ENCODE measurements at regions of chr2 and their contacts with region 1.

Region 1: DNA sequence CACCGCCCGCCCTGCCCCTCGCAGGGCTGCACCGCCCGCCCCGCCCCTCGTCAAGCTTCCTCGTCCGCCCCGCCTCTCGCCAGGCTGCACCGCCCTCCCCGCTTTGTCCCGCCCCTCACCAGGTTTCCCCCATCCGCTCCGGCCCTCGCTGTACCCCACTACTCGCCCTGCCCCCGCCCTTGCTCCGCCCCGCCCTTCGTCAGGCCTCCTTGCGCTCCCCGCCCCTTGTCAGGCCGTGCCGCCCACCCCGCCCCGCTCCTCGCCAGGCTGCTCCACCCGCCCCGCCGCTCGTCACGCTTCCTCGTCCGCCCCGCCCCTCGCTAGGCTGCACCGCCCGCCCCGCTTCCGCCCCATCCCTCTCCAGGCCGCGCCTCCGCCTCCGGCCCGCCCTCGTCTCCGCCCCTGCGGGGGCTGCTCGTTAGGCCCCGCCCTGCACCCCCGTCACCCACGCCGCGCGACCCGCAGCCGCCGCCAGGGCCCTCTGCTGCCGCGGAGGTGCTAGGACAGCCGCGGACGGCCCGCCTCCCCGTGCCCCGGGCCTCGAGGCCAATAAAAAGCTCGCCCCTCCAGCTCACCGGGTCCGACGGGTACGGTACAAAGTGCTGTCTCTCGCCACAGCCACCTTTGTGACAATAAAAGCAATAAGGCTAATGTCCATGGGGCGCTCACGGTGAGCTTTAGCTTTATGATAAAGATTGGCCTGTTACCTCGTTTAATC is 574 bp upstream of the DNPEP start:
- DNase-seq: peak; percentile 98 to 100 (median 99)
- ATAC-seq: peak; percentile 78
- H3K4me3 ChIP-seq: peak overlapping the region; percentile 44
- H3K4me3 Mint-ChIP-seq: peak overlapping the region; percentile 83
- H3K27ac ChIP-seq: peak overlapping the region; percentile 64 to 75
- H3K27ac Mint-ChIP-seq: peak overlapping the region; percentile 95
- H3K4me1 ChIP-seq: peaks cover 26% of the 10 kb centered on the region
- H3K4me1 Mint-ChIP-seq: peaks cover 22% of the 10 kb centered on the region
- H3K27me3 ChIP-seq: no peaks in the 10 kb centered on the region
- H3K27me3 Mint-ChIP-seq: no peaks in the 10 kb centered on the region
- CTCF ChIP-seq: peak; percentile 65

Region 2: GRCh38 chr2:217816396-217816869 is 1571.9 kb before region 1 on chr2:
- CTCF ChIA-PET with region 1: no interaction called
- POLR2A ChIA-PET with region 1: no interaction called
- intact Hi-C with region 1: no loop called
- DNase-seq: no peak
- ATAC-seq: no peak
- H3K4me3 ChIP-seq: no peak overlapping the region
- H3K4me3 Mint-ChIP-seq: no peak overlapping the region
- H3K27ac ChIP-seq: no peak overlapping the region
- H3K27ac Mint-ChIP-seq: no peak overlapping the region
- H3K4me1 ChIP-seq: no peaks in the 10 kb centered on the region
- H3K4me1 Mint-ChIP-seq: no peaks in the 10 kb centered on the region
- H3K27me3 ChIP-seq: no peaks in the 10 kb centered on the region
- H3K27me3 Mint-ChIP-seq: no peaks in the 10 kb centered on the region
- CTCF ChIP-seq: no peak

Region 3: DNA sequence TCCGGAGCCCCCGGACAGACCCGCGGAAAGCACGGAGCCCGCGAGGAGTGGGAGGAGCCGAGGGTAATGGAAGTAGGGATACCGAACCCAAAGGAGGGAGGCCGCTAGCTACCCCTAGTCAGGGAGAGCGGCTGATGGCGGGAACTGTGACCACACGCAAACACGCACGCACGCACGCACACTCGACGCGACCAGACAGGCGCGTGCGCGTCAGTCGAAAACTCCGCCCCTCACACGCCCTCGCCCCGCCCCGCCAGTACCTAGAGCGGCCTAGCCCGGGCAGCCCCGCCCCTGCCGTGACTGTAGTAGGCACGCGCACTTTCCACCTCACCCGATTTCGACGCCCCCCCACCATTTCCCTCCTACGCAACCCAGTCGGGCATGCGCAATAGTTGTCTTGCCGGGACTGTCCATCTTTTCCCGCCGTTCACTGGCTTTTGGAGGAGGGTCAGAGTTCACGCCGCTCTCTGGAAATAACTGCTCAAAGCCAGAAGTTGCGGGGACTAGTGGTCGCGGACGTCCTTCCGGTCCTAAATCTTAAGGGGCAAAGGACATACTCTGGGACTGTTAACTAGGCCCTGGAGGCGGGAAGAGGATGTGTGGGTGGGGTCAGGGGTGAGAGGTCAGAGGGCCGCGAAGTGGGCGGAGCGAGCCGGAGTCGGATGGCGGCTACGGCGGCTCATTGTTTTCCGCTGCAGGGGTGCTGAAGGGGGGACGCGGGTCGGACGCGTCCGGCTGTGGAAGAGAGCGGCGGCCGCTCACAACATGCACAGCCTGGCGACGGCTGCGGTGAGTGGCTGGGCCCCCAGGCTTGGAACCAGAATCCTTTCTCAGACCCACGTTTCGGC is 819.9 kb before region 1 on chr2 and contains the starts of genes CNOT9 and USP37:
- CTCF ChIA-PET with region 1: no interaction called
- POLR2A ChIA-PET with region 1: interaction called, 3 read pairs
- intact Hi-C with region 1: loop called in 1 of 2 experiments (anchors 5 kb)
- DNase-seq: peak; percentile 99 to 100 (median 100)
- ATAC-seq: peak; percentile 85
- H3K4me3 ChIP-seq: peak within 1 kb of the TSS; percentile 77
- H3K4me3 Mint-ChIP-seq: peak within 1 kb of the TSS; percentile 96
- H3K27ac ChIP-seq: peak within 1 kb of the TSS; percentile 98 to 99
- H3K27ac Mint-ChIP-seq: peak within 1 kb of the TSS; percentile 97
- H3K4me1 ChIP-seq: peaks cover 32% of the 10 kb centered on the region
- H3K4me1 Mint-ChIP-seq: peaks cover 77% of the 10 kb centered on the region
- H3K27me3 ChIP-seq: no peaks in the 10 kb centered on the region
- H3K27me3 Mint-ChIP-seq: no peaks in the 10 kb centered on the region
- CTCF ChIP-seq: no peak
- total RNA-seq, gene CNOT9: 62.8 to 66.8 TPM
- total RNA-seq, gene USP37: 20.2 to 24.4 TPM

Region 4: DNA sequence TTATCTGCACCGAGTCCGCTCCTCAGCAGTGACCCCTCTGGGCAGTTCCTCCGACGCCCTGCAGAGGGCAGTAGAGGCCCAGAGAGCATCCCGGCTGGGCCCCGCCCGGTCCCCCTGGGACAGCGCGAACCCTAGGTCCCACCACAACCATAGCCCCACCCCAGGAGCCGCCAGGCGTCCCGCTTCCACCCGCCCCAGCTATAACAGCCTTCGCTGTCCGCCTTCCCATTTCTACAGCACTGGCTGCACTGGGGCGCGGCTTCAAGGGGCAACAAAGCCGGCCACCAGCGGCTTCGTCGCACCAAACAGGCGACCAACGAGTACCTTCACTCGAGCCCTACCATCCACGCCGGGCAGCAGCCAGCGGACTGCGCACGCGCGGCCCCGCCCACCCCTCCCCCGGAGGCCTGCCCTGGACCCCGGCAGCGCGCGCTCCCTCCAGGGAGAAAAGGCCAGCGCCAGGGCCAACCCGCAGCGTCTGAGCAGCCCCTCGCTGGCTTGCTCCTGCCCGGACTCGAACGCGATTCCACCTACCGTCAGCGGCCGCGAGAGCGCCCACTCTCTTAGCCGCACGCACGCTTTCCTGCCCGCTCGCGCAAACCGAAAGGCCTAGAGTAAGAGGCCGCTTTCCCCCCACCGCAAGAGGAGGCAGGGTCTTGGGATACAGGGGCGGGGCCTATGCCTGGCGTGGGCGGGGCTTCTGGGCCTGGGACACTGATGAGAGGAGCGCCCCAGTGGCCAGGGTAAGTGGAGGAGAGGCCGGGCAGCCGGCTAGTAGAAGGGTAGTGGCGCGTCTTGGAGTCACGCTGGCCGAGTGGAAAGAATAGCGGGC is 227.9 kb before region 1 on chr2 and contains the start of gene NHEJ1:
- CTCF ChIA-PET with region 1: interaction called, 3 read pairs
- POLR2A ChIA-PET with region 1: interaction called, 3 read pairs
- intact Hi-C with region 1: loop called in 1 of 2 experiments (anchors 5 kb)
- DNase-seq: peak; percentile 82 to 97 (median 90)
- ATAC-seq: peak; percentile 90
- H3K4me3 ChIP-seq: peak within 1 kb of the TSS; percentile 78
- H3K4me3 Mint-ChIP-seq: peak within 1 kb of the TSS; percentile 94
- H3K27ac ChIP-seq: peak within 1 kb of the TSS; percentile 52 to 77
- H3K27ac Mint-ChIP-seq: peak within 1 kb of the TSS; percentile 94
- H3K4me1 ChIP-seq: peaks cover 17% of the 10 kb centered on the region
- H3K4me1 Mint-ChIP-seq: peaks cover 24% of the 10 kb centered on the region
- H3K27me3 ChIP-seq: no peaks in the 10 kb centered on the region
- H3K27me3 Mint-ChIP-seq: no peaks in the 10 kb centered on the region
- CTCF ChIP-seq: peak; percentile 97
- total RNA-seq, gene NHEJ1: 7.2 to 8.5 TPM

Region 5: DNA sequence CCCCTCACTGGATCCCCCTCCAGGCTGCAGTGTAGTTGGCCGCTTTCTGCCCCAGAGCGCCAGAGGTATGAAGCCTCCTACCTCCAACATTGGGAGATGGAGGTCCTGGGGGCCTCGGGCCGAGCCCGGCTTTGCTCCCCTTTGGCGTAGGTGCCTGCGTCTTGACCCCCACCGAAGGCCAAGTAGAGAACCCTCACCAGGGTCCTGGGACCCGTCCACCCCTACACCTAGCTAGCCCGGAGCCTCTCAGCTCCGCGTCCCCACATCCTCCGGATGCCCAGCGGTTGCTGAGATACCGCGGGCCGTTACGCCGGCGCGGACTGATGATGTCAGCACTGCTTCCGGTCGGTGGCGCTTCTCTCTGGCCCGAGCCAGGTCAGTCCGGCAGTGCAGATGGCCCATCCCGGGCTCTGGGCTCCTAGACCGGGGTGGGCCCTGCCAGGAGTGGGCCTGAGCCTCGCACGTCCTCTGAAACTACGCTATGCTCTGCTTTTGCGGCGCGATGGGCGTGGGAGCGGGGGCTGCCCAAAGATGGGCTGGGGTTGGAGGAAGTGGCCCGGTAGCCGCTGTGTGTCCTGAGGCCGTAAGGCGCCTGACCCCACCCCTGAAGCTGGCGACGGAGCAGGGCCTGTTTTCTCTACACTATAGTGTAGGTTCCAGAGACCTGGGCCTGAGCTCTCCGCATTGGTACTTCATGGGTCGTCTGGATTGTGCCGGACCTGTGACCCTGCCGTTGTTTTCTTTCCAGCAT is 143.0 kb before region 1 on chr2 and contains the starts of genes GLB1L and STK16:
- CTCF ChIA-PET with region 1: interaction called, 4 read pairs
- POLR2A ChIA-PET with region 1: interaction called, 20 read pairs
- intact Hi-C with region 1: no loop called
- DNase-seq: peak; percentile 73 to 93 (median 84)
- ATAC-seq: peak; percentile 44
- H3K4me3 ChIP-seq: peak within 1 kb of the TSS; percentile 99
- H3K4me3 Mint-ChIP-seq: peak within 1 kb of the TSS; percentile 88
- H3K27ac ChIP-seq: peak within 1 kb of the TSS; percentile 95 to 98
- H3K27ac Mint-ChIP-seq: peak within 1 kb of the TSS; percentile 96
- H3K4me1 ChIP-seq: peaks cover 62% of the 10 kb centered on the region
- H3K4me1 Mint-ChIP-seq: peaks cover 74% of the 10 kb centered on the region
- H3K27me3 ChIP-seq: no peaks in the 10 kb centered on the region
- H3K27me3 Mint-ChIP-seq: no peaks in the 10 kb centered on the region
- CTCF ChIP-seq: no peak
- total RNA-seq, gene GLB1L: 2.4 to 3.0 TPM
- total RNA-seq, gene STK16: 11.2 to 14.1 TPM

Region 6: GRCh38 chr2:219294356-219295351 is 93.6 kb before region 1 on chr2:
- CTCF ChIA-PET with region 1: interaction called, 22 read pairs
- POLR2A ChIA-PET with region 1: interaction called, 9 read pairs
- intact Hi-C with region 1: loop called in 1 of 2 experiments (anchors 5 kb)
- DNase-seq: peak; percentile 78 to 96 (median 88)
- ATAC-seq: peak; percentile 94
- H3K4me3 ChIP-seq: peak overlapping the region; percentile 55
- H3K4me3 Mint-ChIP-seq: peak overlapping the region; percentile 67
- H3K27ac ChIP-seq: no peak overlapping the region
- H3K27ac Mint-ChIP-seq: peak overlapping the region; percentile 14
- H3K4me1 ChIP-seq: peaks cover 33% of the 10 kb centered on the region
- H3K4me1 Mint-ChIP-seq: peaks cover 32% of the 10 kb centered on the region
- H3K27me3 ChIP-seq: peaks cover 0 to 3% of the 10 kb centered on the region in 2 experiments
- H3K27me3 Mint-ChIP-seq: peaks cover 7% of the 10 kb centered on the region
- CTCF ChIP-seq: peak; percentile 99

Region 7: DNA sequence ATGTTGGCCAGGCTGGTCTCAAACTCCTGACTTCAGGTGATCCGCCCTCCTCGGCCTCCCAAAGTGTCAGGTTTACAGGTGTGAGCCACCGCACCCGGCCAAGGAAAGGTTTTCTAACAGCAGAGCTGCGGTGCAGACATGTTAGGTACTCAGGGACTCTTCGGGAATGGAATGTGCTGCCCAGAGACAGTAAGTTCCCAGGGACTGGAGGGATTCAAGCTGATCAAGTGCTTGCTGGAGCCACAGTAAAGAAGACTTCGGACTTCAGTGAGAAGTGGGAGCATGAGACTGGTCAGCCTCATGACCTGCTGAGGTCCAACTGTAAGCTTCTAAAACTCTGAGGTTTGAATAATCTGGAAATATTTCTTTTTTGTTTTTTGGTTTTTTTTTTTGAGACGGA is 22.1 kb after region 1 on chr2:
- CTCF ChIA-PET with region 1: no interaction called
- POLR2A ChIA-PET with region 1: no interaction called
- intact Hi-C with region 1: no loop called
- DNase-seq: no peak
- ATAC-seq: no peak
- H3K4me3 ChIP-seq: no peak overlapping the region
- H3K4me3 Mint-ChIP-seq: no peak overlapping the region
- H3K27ac ChIP-seq: no peak overlapping the region
- H3K27ac Mint-ChIP-seq: no peak overlapping the region
- H3K4me1 ChIP-seq: no peaks in the 10 kb centered on the region
- H3K4me1 Mint-ChIP-seq: no peaks in the 10 kb centered on the region
- H3K27me3 ChIP-seq: peaks cover 9 to 16% of the 10 kb centered on the region in 2 experiments
- H3K27me3 Mint-ChIP-seq: peaks cover 49% of the 10 kb centered on the region
- CTCF ChIP-seq: no peak

Region 8: DNA sequence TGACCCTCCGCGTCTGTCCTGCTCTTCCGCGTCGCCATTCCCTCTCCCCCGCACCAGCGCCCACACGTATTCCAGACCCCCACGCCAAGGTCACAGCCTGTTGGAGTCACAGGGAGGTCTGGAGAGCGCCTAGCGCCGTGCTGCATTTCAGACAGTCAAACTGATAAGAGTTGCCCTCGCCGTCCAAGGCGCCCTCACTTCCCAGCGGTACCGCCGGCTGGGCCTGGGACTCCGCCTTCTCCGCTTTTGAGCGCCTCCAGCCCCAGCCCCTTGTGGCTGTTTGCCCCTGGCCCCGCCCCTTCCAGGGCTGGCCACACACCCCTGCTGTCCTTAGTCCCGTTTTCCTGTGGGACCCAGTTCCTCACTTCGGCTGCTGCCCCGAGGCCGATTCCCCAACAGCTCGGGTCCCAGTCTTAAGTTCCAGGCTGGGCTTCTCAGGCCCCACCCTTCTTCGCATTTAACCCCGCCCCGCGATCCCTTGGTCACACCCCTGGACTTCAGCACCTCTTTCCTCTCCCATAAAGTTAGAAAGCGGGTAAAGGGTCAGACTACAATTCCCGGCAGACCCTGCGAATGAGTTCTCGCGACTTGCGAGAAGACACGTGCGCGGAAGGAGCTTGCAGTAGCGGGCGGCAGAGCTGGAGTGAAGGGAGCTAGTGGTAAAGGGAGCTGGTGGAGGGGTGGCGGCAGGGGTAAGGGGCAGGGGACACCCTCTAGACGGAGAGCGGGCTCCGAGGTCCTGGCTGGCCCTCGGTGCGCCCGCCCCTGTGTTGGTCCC is 110.2 kb after region 1 on chr2 and contains the start of gene GMPPA:
- CTCF ChIA-PET with region 1: interaction called, 5 read pairs
- POLR2A ChIA-PET with region 1: interaction called, 15 read pairs
- intact Hi-C with region 1: loop called in 1 of 2 experiments (anchors 2 kb)
- DNase-seq: peak; percentile 82 to 97 (median 88)
- ATAC-seq: peak; percentile 94
- H3K4me3 ChIP-seq: peak within 1 kb of the TSS; percentile 91
- H3K4me3 Mint-ChIP-seq: peak within 1 kb of the TSS; percentile 93
- H3K27ac ChIP-seq: peak within 1 kb of the TSS in 1 of 2 donors; percentile 45
- H3K27ac Mint-ChIP-seq: peak within 1 kb of the TSS; percentile 63
- H3K4me1 ChIP-seq: peaks cover 44% of the 10 kb centered on the region
- H3K4me1 Mint-ChIP-seq: peaks cover 37% of the 10 kb centered on the region
- H3K27me3 ChIP-seq: peaks cover 40 to 43% of the 10 kb centered on the region in 2 experiments
- H3K27me3 Mint-ChIP-seq: peaks cover 49% of the 10 kb centered on the region
- CTCF ChIP-seq: no peak
- total RNA-seq, gene GMPPA: 13.3 to 14.4 TPM

Measured in CD4-positive, alpha-beta T cell (primary cell).